ENCODE measurements at regions of chr3 and their contacts with region 1.

Region 1: DNA sequence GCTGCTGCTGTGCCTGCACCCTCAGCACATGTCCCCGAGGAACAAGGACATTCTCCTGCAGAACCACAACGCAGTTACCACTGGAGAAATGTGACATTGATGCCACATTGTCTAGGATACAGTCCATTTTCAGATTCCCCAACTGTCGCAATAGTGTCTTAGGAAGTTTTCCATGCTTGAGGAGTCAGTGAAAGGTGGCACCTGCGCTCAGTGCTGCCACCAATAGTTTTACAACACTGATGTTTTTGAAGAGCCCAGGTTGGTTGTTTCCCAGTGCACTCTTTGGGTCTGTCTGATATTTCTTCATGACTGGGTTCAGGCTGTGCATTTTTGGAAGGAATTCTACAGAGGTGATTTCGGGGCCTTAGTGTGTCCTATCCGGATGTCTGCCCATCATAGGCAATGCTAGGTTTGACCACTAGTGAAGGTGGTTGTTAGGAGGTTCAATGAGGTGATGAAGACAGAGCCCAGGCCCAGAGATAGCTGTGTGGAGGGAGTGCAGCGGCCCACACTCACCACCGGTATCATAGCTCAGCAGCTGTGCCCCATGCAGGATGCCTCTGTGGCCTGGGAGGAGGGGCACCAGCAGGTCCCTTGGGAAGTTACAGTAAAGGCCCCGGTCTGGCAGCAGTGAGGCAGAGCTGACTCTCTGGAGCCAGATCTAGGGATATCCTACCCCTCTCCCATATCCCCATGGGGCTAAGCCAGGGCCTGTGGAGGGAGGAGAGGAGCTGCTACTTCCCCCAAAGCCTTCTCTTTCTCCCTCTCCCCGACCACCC is 96.6 kb downstream of the DNAJB8 start:
- DNase-seq: no peak

Region 2: DNA sequence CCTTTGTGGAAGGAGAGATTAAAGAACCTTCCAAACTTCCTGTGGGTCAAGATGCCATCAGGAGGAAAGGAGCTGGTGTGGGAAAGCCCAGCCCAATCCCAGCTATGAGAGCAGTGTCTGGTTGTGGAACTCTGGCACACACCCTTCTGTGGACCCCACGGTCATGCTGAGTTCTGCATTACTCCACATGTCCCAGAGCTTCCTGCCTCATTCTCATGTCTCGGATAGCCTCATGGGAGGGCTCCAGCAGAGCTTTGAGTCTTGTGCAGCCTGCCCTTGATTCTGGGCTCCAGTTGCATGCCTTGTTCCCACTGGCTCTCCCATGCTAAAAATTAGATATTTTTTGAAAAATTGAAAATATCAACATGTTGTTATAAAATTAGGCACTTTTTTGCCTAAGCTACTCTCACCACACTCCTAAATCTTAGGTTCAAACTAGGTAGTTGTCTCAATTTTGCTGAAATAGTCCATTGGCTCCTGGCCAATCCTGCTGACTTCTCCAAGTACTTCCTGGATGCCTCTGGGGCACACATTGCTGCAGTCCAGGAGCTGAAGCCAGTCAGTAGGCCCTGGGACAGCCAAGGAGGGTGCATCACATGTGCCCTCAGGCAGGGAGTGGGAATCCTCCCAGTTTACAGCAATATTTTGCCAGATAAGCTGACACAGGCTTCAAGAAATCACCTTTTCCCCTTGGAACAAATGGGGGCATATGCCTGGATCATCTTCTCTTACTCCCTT is 72.5 kb before region 1 on chr3:
- intact Hi-C with region 1: loop called (anchors 5 kb)
- DNase-seq: no peak

Region 3: DNA sequence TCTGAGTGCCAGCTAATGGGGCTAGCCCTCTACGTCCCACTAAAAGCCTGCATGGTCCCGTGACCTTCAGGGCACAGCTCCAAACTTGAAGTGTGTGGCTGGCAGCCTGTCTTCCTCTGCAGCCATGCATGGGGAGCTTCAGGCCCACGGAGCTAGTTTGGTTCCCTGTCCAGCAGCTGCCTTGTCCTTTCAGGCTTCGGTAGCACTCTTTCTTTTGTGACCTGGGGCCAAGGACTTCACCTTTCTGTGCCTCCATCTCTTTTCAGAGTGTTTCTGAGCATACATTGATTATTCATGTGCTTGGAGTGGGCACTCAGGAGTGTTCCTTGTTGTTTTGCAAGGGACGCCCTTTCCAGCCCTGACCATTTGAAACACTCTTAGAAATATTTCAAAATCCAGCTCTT is 58.6 kb before region 1 on chr3:
- intact Hi-C with region 1: loop called (anchors 5 kb)
- DNase-seq: peak; percentile 84

Region 4: GRCh38 chr3:128383316-128384235 is 13.5 kb after region 1 on chr3:
- intact Hi-C with region 1: loop called (anchors 2 kb)
- DNase-seq: peak; percentile 88

Region 5: GRCh38 chr3:128508852-128509251 is 138.8 kb after region 1 on chr3:
- intact Hi-C with region 1: no loop called
- DNase-seq: no peak

Region 6: GRCh38 chr3:128845778-128846485 is 475.9 kb after region 1 on chr3:
- intact Hi-C with region 1: no loop called
- DNase-seq: peak; percentile 94